GM10248 (cell line): ENCODE measurements at regions of chr3 and their contacts with region 1.

Region 1: GRCh38 chr3:98602078-98602678 is 8.8 kb upstream of the CPOX start:
- DNase-seq: peak; percentile 53
- CTCF ChIP-seq: peak; percentile 81

Region 2: DNA sequence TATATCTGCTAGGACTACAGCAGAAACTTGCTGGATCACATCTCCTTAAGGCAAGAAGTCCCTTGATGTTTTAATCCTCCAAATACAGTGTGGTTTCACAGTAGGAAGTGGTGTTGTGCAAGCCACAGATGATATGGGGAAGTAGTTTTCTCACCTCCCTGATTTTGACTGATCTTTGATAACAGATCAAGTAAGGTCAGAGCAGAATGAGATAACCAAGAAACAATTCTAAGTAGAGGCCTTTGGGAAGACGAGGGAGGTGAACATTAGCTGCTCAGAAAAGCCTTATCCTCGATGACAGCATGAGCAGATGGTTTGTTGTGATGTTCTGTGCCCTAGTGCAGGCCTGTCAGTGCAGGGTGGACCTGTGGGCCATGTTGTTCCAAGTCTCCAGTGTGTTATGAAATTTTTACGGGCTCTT is 691.2 kb before region 1 on chr3:
- CTCF ChIA-PET with region 1: no interaction called
- POLR2A ChIA-PET with region 1: no interaction called
- DNase-seq: peak; percentile 6
- CTCF ChIP-seq: no peak

Region 3: GRCh38 chr3:98359993-98360675 is 242.0 kb before region 1 on chr3:
- CTCF ChIA-PET with region 1: no interaction called
- POLR2A ChIA-PET with region 1: no interaction called
- DNase-seq: no peak
- CTCF ChIP-seq: no peak

Region 4: DNA sequence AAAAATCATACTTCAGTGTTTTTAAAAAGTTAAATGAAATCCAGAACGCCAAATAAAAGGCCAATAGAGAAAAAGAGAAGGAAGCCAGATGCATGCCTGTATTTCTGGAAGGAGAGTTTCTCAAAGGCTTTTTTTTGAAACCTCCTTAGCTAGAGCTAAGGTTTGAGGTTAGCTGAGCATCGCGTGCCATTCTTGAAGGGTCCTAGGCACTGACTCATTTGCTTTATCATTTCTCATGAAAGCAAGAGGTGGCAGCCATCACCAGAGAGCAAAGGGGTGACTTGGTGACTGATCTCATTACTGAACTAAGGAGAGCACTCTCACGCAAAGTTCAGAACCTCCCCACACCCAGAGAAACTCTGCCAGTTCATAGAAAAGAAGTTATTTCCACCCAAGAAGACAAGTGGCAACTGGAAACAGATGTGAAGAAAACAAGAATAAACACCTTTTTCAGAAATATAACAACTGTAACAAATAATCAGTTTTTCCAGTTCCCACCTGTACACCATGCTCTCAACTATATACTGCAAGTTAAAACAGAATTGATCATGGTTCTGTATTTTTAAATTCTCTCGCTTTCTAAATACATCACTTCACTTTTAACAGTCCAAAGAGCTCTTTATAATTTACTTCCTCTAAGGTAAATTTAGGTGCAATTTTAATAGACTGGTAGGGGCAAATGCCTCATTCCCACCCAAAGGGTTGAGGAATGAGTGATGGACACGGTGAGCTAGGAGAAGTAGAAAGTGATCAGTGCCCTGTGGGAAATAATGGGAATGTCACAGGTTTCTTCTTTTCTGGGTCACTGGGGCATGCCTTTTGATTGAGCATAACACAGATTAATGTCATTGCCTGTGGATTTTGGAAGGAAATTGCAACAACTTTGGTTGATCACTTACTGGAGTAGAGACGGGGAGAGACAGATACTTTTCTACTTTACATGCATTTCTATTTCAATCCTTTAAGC is 45.7 kb before region 1 on chr3:
- CTCF ChIA-PET with region 1: interaction called, 10 read pairs
- POLR2A ChIA-PET with region 1: no interaction called
- DNase-seq: peak; percentile 54
- CTCF ChIP-seq: no peak

Region 5: GRCh38 chr3:98588065-98588464 is 14.1 kb before region 1 on chr3:
- CTCF ChIA-PET with region 1: interaction called, 41 read pairs
- POLR2A ChIA-PET with region 1: no interaction called
- DNase-seq: no peak
- CTCF ChIP-seq: no peak

Region 6: GRCh38 chr3:98623572-98624280 is 21.5 kb after region 1 on chr3:
- CTCF ChIA-PET with region 1: interaction called, 49 read pairs
- POLR2A ChIA-PET with region 1: no interaction called
- DNase-seq: no peak
- CTCF ChIP-seq: no peak

Region 7: DNA sequence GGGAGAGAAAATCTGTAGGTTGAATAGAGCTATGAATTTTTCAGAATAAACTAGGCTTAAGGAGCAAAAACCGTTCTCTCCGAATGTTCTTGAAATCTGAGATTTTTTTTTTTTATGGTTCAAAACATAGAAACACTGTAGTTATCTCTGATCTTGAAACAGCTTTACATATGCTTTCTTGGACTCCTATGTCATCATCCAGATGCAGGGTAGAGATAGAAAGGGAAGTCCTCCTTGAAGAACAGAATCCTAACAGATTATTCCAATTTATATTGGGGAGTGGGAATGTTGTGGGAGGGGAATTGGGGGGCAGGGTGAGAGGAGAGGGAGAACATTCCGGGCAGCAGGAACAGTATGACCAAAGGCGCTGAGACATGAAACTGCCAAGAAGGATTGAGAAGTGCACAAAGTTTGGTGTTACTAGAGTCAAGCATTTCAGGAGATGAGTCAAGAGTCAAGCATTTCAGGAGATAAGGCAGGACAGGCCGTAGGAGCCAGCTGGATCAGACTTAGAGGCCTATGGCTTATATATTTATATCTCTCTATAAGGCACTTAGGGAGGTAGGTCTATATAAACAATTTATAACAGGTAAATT is 139.0 kb after region 1 on chr3:
- CTCF ChIA-PET with region 1: interaction called, 25 read pairs
- POLR2A ChIA-PET with region 1: no interaction called
- DNase-seq: no peak
- CTCF ChIP-seq: no peak

Region 8: GRCh38 chr3:98778852-98779413 is 176.8 kb after region 1 on chr3:
- CTCF ChIA-PET with region 1: interaction called, 35 read pairs
- POLR2A ChIA-PET with region 1: no interaction called
- DNase-seq: no peak
- CTCF ChIP-seq: no peak